CD8-positive, alpha-beta T cell (primary cell): ENCODE measurements at regions of chr13 and their contacts with region 1.

Region 1: DNA sequence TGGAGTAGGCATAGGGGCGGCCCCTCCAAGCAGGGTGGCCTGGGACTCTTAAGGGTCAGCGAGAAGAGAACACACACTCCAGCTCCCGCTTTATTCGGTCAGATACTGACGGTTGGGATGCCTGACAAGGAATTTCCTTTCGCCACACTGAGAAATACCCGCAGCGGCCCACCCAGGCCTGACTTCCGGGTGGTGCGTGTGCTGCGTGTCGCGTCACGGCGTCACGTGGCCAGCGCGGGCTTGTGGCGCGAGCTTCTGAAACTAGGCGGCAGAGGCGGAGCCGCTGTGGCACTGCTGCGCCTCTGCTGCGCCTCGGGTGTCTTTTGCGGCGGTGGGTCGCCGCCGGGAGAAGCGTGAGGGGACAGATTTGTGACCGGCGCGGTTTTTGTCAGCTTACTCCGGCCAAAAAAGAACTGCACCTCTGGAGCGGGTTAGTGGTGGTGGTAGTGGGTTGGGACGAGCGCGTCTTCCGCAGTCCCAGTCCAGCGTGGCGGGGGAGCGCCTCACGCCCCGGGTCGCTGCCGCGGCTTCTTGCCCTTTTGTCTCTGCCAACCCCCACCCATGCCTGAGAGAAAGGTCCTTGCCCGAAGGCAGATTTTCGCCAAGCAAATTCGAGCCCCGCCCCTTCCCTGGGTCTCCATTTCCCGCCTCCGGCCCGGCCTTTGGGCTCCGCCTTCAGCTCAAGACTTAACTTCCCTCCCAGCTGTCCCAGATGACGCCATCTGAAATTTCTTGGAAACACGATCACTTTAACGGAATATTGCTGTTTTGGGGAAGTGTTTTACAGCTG is at the starts of genes BRCA2 and ZAR1L:
- DNase-seq: peak; percentile 73 to 95 (median 88)
- ATAC-seq: peak; percentile 90
- H3K4me3 ChIP-seq: peak within 1 kb of the TSS; percentile 80 to 81
- H3K4me3 Mint-ChIP-seq: peak within 1 kb of the TSS; percentile 93
- H3K27ac ChIP-seq: peak within 1 kb of the TSS; percentile 99
- H3K27ac Mint-ChIP-seq: peak within 1 kb of the TSS; percentile 100
- H3K4me1 ChIP-seq: peaks cover 4% of the 10 kb centered on the region
- H3K4me1 Mint-ChIP-seq: peaks cover 14% of the 10 kb centered on the region
- H3K27me3 ChIP-seq: no peaks in the 10 kb centered on the region
- H3K27me3 Mint-ChIP-seq: no peaks in the 10 kb centered on the region
- CTCF ChIP-seq: no peak
- total RNA-seq, gene BRCA2: 2.6 to 3.6 TPM
- total RNA-seq, gene ZAR1L: not detected

Region 2: DNA sequence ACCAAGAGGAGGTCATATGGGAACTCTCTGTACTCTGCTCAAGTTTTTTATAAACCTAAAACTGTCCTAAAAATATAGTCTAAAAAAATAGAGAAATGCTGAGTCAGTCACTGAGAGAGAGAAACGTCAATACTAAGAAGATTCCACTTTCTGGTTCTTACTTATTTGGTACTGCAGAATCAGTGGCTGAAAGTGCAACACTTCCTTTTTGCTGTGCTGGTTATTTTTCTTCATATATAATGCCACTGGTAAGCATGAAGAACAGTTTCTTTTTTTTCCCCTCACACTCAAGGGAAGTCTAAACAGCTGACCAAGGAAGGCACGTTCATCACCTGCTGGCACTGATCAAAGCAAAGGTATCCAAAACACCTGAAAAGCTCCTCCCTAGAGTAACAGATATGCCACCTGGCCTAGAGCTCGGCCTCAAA is 156.8 kb after region 1 on chr13:
- CTCF ChIA-PET with region 1: no interaction called
- POLR2A ChIA-PET with region 1: no interaction called
- intact Hi-C with region 1: no loop called
- DNase-seq: no peak
- ATAC-seq: no peak
- H3K4me3 ChIP-seq: no peak overlapping the region
- H3K4me3 Mint-ChIP-seq: no peak overlapping the region
- H3K27ac ChIP-seq: no peak overlapping the region
- H3K27ac Mint-ChIP-seq: no peak overlapping the region
- H3K4me1 ChIP-seq: no peaks in the 10 kb centered on the region
- H3K4me1 Mint-ChIP-seq: no peaks in the 10 kb centered on the region
- H3K27me3 ChIP-seq: no peaks in the 10 kb centered on the region
- H3K27me3 Mint-ChIP-seq: no peaks in the 10 kb centered on the region
- CTCF ChIP-seq: no peak

Region 3: GRCh38 chr13:33033051-33033812 is 717.8 kb after region 1 on chr13:
- CTCF ChIA-PET with region 1: no interaction called
- POLR2A ChIA-PET with region 1: no interaction called
- intact Hi-C with region 1: loop called in 1 of 2 experiments (anchors 5 kb)
- DNase-seq: peak in 7 of 9 experiments; percentile 4 to 64 (median 27)
- ATAC-seq: peak; percentile 95
- H3K4me3 ChIP-seq: peak overlapping the region in 1 of 2 experiments; percentile 44
- H3K4me3 Mint-ChIP-seq: peak overlapping the region; percentile 84
- H3K27ac ChIP-seq: no peak overlapping the region
- H3K27ac Mint-ChIP-seq: peak overlapping the region; percentile 91
- H3K4me1 ChIP-seq: peaks cover 11% of the 10 kb centered on the region
- H3K4me1 Mint-ChIP-seq: peaks cover 16% of the 10 kb centered on the region
- H3K27me3 ChIP-seq: no peaks in the 10 kb centered on the region
- H3K27me3 Mint-ChIP-seq: peaks cover 12% of the 10 kb centered on the region
- CTCF ChIP-seq: no peak

Region 4: DNA sequence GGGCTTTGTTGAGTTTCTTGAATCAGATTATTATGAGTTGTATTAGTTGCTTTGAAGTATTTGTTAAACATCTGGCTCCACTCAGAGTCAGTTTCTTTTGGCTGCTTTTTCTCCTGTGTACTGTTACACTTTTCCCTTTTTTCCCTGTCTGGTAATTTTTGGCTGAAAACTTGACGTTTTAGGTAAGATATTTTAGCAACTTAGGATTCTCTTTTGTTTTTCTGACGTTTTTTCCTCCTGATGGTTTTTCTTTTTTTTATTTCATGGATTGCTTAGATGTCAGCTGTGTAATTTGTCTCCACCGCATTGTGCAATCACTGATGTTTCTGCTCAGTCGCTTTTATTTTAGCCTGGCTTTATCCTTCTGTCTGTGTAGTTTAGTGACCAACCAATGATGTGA is 1523.2 kb after region 1 on chr13:
- CTCF ChIA-PET with region 1: no interaction called
- POLR2A ChIA-PET with region 1: no interaction called
- intact Hi-C with region 1: no loop called
- DNase-seq: no peak
- ATAC-seq: no peak
- H3K4me3 ChIP-seq: no peak overlapping the region
- H3K4me3 Mint-ChIP-seq: no peak overlapping the region
- H3K27ac ChIP-seq: no peak overlapping the region
- H3K27ac Mint-ChIP-seq: no peak overlapping the region
- H3K4me1 ChIP-seq: no peaks in the 10 kb centered on the region
- H3K4me1 Mint-ChIP-seq: no peaks in the 10 kb centered on the region
- H3K27me3 ChIP-seq: no peaks in the 10 kb centered on the region
- H3K27me3 Mint-ChIP-seq: no peaks in the 10 kb centered on the region
- CTCF ChIP-seq: no peak